ENCODE measurements at regions of chr2 and their contacts with region 1.

Region 1: DNA sequence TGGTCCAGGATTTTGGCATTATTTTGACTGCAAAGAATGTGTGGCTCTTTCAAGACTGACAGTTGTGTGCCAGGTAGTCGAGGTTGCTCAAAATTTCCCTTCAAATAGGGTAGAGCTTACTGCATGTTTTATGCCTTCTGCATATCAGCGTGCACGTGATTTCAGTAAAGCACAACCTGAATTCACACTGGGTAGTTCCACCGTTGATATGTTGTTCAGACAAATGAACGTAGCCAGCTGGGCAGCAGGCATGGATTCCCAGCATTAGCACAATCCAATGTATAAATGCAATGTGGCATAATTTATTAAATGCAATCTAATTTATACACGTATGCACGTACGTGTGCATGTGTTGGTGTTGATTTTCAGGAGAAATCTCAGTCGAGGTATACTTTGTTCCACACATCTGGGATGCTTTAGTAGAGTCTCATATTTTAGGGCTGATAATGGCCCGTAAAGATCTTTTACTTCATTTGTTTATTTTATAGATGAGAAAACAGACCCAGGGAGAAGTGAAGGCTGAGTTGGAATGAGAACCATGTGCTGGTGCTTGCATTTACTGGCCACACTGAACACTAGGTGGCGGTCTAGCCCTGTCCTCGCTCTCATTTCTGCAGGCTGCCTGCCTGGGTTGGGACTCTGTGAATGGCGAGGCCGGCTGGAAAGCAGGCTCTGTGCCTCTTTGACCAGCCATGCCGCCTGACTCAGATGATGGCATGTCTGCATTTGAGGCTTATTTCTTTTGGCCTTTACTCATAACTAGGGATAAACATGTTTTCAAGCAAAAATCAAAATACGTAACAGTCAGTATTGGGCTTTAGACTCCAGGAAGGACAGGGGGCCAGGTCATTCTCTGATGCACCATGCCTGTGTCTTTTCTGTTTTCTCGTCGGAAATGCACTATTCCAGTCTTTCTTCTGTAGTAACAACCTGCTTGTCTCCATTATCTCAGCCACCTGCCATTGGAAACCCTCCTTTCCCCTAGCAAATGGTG is 120.4 kb downstream of the RNF144A start:
- DNase-seq: peak; percentile 26 to 74 (median 52)
- ATAC-seq: peak; percentile 94
- H3K4me3 ChIP-seq: no peak overlapping the region
- H3K4me3 Mint-ChIP-seq: no peak overlapping the region
- H3K27ac ChIP-seq: no peak overlapping the region
- H3K27ac Mint-ChIP-seq: peak overlapping the region; percentile 52
- H3K4me1 ChIP-seq: peaks cover 5% of the 10 kb centered on the region
- H3K4me1 Mint-ChIP-seq: peaks cover 12% of the 10 kb centered on the region
- H3K27me3 ChIP-seq: no peaks in the 10 kb centered on the region
- H3K27me3 Mint-ChIP-seq: no peaks in the 10 kb centered on the region
- CTCF ChIP-seq: peak; percentile 75

Region 2: GRCh38 chr2:6872394-6872793 is 165.2 kb before region 1 on chr2:
- CTCF ChIA-PET with region 1: no interaction called
- POLR2A ChIA-PET with region 1: no interaction called
- intact Hi-C with region 1: no loop called
- DNase-seq: peak in 1 of 14 experiments; percentile 11
- ATAC-seq: no peak
- H3K4me3 ChIP-seq: no peak overlapping the region
- H3K4me3 Mint-ChIP-seq: peak overlapping the region; percentile 32
- H3K27ac ChIP-seq: no peak overlapping the region
- H3K27ac Mint-ChIP-seq: peak overlapping the region; percentile 15
- H3K4me1 ChIP-seq: no peaks in the 10 kb centered on the region
- H3K4me1 Mint-ChIP-seq: peaks cover 42% of the 10 kb centered on the region
- H3K27me3 ChIP-seq: no peaks in the 10 kb centered on the region
- H3K27me3 Mint-ChIP-seq: no peaks in the 10 kb centered on the region
- CTCF ChIP-seq: no peak

Region 3: GRCh38 chr2:7004636-7005035 is 33.0 kb before region 1 on chr2:
- CTCF ChIA-PET with region 1: no interaction called
- POLR2A ChIA-PET with region 1: no interaction called
- intact Hi-C with region 1: loop called in 1 of 2 experiments (anchors 1 kb)
- DNase-seq: peak in 1 of 14 experiments; percentile 14
- ATAC-seq: no peak
- H3K4me3 ChIP-seq: no peak overlapping the region
- H3K4me3 Mint-ChIP-seq: no peak overlapping the region
- H3K27ac ChIP-seq: no peak overlapping the region
- H3K27ac Mint-ChIP-seq: peak overlapping the region; percentile 69
- H3K4me1 ChIP-seq: peaks cover 6% of the 10 kb centered on the region
- H3K4me1 Mint-ChIP-seq: peaks cover 55% of the 10 kb centered on the region
- H3K27me3 ChIP-seq: no peaks in the 10 kb centered on the region
- H3K27me3 Mint-ChIP-seq: no peaks in the 10 kb centered on the region
- CTCF ChIP-seq: no peak

Region 4: GRCh38 chr2:7083577-7084509 is 46.2 kb after region 1 on chr2:
- CTCF ChIA-PET with region 1: no interaction called
- POLR2A ChIA-PET with region 1: no interaction called
- intact Hi-C with region 1: loop called in 1 of 2 experiments (anchors 1 kb)
- DNase-seq: peak in 3 of 14 experiments; percentile 15 to 41 (median 33)
- ATAC-seq: peak; percentile 41
- H3K4me3 ChIP-seq: no peak overlapping the region
- H3K4me3 Mint-ChIP-seq: no peak overlapping the region
- H3K27ac ChIP-seq: no peak overlapping the region
- H3K27ac Mint-ChIP-seq: no peak overlapping the region
- H3K4me1 ChIP-seq: no peaks in the 10 kb centered on the region
- H3K4me1 Mint-ChIP-seq: no peaks in the 10 kb centered on the region
- H3K27me3 ChIP-seq: no peaks in the 10 kb centered on the region
- H3K27me3 Mint-ChIP-seq: no peaks in the 10 kb centered on the region
- CTCF ChIP-seq: peak; percentile 30